ENCODE measurements at regions of chrX and their contacts with region 1.

Region 1: GRCh38 chrX:31213941-31214340 is 142.1 kb upstream of the FTHL17 start:
- DNase-seq: peak; percentile 32
- H3K4me3 ChIP-seq: no peak overlapping the region
- H3K27ac ChIP-seq: peak overlapping the region; percentile 31
- H3K4me1 ChIP-seq: peaks cover 22% of the 10 kb centered on the region
- H3K27me3 ChIP-seq: no peaks in the 10 kb centered on the region
- CTCF ChIP-seq: peak; percentile 74 to 81

Region 2: DNA sequence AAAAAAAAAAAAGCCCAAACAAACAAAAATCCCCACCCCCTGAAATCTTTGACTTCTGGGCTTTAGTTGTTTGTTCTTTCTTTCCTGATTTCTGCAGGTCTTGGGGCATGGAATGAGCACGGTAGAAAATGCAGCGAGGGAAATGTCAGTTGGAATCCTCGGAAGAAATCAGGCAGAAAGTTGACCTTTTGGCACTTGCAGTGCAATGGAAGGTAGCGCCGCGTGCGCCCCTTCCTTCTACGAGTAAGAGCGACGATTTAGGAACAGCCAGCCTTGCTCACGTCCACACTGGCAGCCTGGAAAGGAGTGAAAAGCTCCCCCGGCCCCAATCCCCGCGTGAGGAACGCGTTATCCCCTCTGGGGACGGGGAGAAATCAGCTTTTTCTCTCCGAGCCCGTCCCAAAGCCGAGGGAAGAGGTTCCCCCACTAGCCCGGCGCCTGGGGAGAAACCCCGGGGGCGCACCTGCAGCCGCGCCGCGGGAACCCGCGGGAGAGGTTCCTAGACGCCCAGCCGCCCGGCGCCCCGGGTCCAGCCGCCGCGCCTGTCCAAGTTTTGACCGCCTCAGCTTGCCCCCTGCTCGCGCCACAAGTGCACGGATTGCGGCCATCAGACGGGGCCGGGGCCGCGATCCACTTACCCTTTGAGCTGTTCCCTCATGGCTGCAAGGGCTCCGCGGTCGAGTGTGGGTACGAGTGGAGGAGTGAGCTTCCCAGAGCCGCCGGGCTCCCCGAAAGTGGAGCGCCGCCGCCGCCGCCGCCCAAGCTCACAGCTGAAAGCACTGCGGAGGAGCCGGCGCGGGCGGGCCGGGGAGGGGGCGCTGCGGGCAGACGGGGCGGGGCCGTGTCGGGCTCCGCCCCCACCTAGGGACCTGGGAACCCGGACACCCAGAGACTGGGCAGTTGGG is 52.5 kb after region 1 on chrX:
- CTCF ChIA-PET with region 1: no interaction called
- dilution Hi-C with region 1: no loop called
- in situ Hi-C with region 1: no loop called
- intact Hi-C with region 1: loop called (anchors 1 kb)
- DNase-seq: peak; percentile 43
- H3K4me3 ChIP-seq: peak overlapping the region; percentile 67 to 73 (median 68)
- H3K27ac ChIP-seq: peak overlapping the region; percentile 63
- H3K4me1 ChIP-seq: peaks cover 11% of the 10 kb centered on the region
- H3K27me3 ChIP-seq: peaks cover 2% of the 10 kb centered on the region
- CTCF ChIP-seq: no peak

Region 3: DNA sequence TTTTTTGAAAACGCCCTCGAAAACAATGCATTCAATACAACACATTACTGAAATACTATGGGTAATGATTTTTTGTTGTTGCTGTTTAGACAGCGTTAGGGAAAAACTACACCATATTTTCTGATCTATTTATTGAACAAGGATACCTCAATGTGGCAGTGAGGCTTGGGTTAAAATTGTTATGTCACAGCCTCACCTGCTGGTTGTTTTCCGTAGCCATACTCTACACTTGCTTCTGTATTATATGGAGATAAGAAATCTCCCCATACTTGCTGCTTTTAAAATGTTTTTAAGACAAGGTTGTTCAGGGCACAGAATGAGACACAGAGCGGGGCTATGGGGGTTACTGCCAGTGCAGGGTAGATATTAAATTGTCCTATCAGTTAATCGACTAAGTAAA is 79.5 kb after region 1 on chrX:
- CTCF ChIA-PET with region 1: no interaction called
- dilution Hi-C with region 1: no loop called
- in situ Hi-C with region 1: no loop called
- intact Hi-C with region 1: loop called (anchors 1 kb)
- DNase-seq: no peak
- H3K4me3 ChIP-seq: no peak overlapping the region
- H3K27ac ChIP-seq: no peak overlapping the region
- H3K4me1 ChIP-seq: peaks cover 10% of the 10 kb centered on the region
- H3K27me3 ChIP-seq: no peaks in the 10 kb centered on the region
- CTCF ChIP-seq: peak in 1 of 2 donors; percentile 39

Region 4: DNA sequence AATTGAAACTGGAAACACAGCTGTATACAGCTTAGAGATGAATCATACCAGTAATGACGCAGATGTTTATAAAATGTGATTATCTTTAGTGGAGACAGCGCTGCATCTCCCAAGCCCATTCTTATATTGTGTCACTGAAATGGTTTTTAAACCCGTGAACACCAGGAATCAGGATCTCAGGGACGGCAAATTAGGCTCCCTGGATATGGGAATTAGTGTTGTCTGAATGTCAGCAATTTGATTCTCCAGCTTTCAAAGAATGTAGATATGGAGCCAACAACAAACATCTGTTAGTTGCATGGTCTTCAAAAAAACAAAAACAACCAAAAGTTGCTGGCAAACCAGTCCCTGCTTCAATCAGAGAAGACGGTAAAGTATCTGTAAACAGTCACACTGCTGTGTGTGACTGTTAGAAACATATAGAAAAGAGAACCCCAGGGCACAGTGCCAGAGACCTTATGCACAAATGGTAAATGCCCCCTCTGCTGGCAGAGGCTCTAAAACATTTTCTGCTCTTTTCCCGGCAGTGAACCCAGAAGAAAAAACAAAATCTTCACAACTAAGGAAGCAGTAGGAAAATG is 209.8 kb after region 1 on chrX:
- CTCF ChIA-PET with region 1: no interaction called
- dilution Hi-C with region 1: no loop called
- in situ Hi-C with region 1: no loop called
- intact Hi-C with region 1: loop called (anchors 1 kb)
- DNase-seq: peak; percentile 20
- H3K4me3 ChIP-seq: no peak overlapping the region
- H3K27ac ChIP-seq: no peak overlapping the region
- H3K4me1 ChIP-seq: no peaks in the 10 kb centered on the region
- H3K27me3 ChIP-seq: no peaks in the 10 kb centered on the region
- CTCF ChIP-seq: peak; percentile 51 to 54

Region 5: DNA sequence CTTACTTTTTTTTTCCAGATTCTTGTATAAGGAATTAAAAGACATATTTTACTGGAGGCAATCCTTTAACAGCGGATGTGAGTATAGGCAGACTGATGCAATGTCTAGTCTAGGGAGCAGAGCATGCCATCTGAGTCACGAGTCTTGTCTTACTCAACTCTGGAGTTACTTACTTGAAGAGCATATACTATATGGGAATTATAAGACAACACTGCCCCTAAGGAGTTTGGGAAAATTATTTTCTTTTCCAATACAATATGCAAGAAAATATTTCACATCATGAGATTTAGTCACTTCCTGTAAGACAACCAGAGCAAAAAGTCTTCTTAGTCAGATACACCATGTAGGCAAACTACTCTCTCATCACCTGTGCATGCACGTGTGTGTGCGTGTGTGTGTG is 395.2 kb after region 1 on chrX:
- CTCF ChIA-PET with region 1: no interaction called
- dilution Hi-C with region 1: no loop called
- in situ Hi-C with region 1: no loop called
- intact Hi-C with region 1: loop called (anchors 2 kb)
- DNase-seq: peak; percentile 85
- H3K4me3 ChIP-seq: no peak overlapping the region
- H3K27ac ChIP-seq: peak overlapping the region; percentile 89
- H3K4me1 ChIP-seq: peaks cover 20% of the 10 kb centered on the region
- H3K27me3 ChIP-seq: no peaks in the 10 kb centered on the region
- CTCF ChIP-seq: peak in 1 of 2 donors; percentile 17

Region 6: GRCh38 chrX:31658360-31658759 is 444.4 kb after region 1 on chrX:
- CTCF ChIA-PET with region 1: no interaction called
- dilution Hi-C with region 1: no loop called
- in situ Hi-C with region 1: loop called in 1 of 2 experiments (anchors 25 kb)
- intact Hi-C with region 1: loop called (anchors 1 kb)
- DNase-seq: no peak
- H3K4me3 ChIP-seq: no peak overlapping the region
- H3K27ac ChIP-seq: no peak overlapping the region
- H3K4me1 ChIP-seq: no peaks in the 10 kb centered on the region
- H3K27me3 ChIP-seq: peaks cover 9% of the 10 kb centered on the region
- CTCF ChIP-seq: peak; percentile 53 to 73

Region 7: DNA sequence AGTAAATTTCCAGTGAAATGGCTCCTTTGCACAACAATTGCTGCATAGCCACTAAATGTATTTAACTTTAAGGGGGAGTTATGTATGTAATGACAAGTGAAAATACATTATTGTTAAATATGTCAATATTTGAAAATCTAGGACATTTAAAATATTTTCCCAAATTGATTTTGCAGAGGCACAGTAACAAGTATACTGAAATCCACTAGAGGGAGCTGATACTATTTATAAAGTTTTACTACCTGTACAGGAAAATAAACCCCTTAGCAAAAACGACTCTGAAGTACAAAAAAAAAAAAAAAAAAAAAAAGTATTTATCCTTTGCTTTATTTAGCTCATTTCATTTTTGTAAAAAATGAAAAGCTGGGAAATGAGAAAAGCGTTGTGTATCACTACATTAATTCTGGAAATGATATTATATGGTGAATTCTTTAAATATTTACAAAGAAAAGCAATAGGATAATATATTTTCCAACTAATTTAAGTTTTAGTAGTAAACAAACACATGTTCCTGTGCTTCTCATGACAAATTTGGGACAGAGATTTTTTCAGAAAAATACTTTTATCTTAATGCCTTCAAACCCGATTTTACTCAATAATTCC is 1269.7 kb after region 1 on chrX:
- CTCF ChIA-PET with region 1: no interaction called
- dilution Hi-C with region 1: no loop called
- in situ Hi-C with region 1: no loop called
- intact Hi-C with region 1: no loop called
- DNase-seq: no peak
- H3K4me3 ChIP-seq: no peak overlapping the region
- H3K27ac ChIP-seq: no peak overlapping the region
- H3K4me1 ChIP-seq: no peaks in the 10 kb centered on the region
- H3K27me3 ChIP-seq: no peaks in the 10 kb centered on the region
- CTCF ChIP-seq: peak; percentile 42 to 44